ENCODE measurements at regions of chr7 and their contacts with region 1.

Region 1: DNA sequence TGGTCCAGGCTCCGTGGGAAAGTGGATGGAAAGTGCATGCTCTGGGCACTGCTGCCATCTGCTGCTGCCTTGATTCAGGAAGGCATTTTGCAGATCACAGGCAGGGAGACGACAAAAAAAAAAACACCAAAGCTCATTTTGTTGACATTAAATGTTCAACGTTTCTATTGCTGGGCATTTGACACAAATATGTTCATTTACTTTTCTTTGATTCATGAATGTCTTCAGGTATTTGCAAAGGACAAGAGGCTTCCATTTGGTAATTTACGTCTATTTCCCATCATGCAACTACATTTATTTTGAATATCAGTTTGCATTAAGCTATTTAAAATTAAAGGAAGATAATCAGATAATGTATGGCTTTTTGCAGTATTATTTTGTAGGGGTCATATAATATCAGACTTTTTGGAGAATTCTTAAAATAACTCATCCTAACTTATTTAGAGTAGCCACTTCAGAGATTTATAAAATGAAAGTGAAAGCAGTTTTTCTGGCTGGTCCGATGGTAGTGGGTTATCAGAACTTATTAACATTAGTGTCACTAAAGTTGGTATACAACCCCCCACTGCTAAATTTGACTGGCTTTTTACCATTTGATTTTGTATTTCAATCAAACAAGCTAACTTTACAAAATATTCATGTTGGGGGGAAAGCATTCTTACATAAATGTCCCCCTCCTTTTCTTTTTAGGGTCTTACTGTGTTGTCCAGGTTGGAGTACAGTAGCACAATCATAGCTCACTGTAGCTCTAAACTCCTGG is 65.3 kb downstream of the PDIA4 start:
- DNase-seq: peak in 1 of 2 donors; percentile 77
- H3K4me3 ChIP-seq: peak overlapping the region; percentile 65 to 71
- H3K27ac ChIP-seq: peak overlapping the region; percentile 68 to 79
- H3K4me1 ChIP-seq: peaks cover 0 to 2% of the 10 kb centered on the region in 2 donors
- H3K27me3 ChIP-seq: no peaks in the 10 kb centered on the region
- CTCF ChIP-seq: peak; percentile 46 to 73 (median 67)

Region 2: GRCh38 chr7:148503875-148504487 is 459.0 kb before region 1 on chr7:
- intact Hi-C with region 1: loop called (anchors 1 kb)
- DNase-seq: no peak
- H3K4me3 ChIP-seq: no peak overlapping the region
- H3K27ac ChIP-seq: no peak overlapping the region
- H3K4me1 ChIP-seq: no peaks in the 10 kb centered on the region
- H3K27me3 ChIP-seq: no peaks in the 10 kb centered on the region
- CTCF ChIP-seq: peak; percentile 46 to 69 (median 68)

Region 3: DNA sequence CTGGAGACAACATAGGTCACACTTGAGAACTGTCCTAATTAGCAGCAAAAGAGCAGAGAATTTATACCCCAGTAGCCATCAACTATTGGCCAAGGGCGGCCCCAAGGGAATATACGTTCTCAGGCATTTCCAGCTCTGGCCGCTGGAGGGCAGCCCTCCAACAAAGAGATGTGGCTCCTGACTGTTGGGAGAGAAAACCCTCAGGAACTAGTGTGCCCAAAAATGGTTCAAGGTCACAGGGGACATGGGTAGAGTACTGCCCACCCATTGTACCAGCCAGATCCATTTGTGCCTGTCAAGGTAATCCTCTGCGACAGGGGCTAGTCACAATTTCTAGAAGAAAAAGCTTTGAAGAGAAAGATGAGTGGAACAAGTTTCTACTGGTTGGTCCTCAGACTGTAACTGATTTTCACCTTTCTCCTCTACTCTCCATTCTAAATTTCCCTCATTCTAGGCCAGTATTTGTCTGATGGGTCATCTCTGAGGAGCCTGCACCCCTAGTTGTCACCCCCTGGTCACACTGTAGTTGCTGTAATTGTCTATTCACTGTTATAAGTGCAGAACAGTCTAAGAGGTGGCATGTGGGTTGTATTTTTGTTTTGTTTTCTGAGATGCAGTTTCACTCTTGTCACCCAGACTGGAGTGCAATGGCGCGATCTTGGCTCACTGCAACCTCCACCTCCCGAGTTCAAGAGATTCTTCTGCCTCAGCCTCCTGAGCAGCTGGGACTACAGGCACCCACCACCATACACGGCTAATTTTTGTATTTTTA is 387.2 kb before region 1 on chr7:
- intact Hi-C with region 1: loop called (anchors 1 kb)
- DNase-seq: peak in 1 of 2 donors; percentile 73
- H3K4me3 ChIP-seq: no peak overlapping the region
- H3K27ac ChIP-seq: no peak overlapping the region
- H3K4me1 ChIP-seq: no peaks in the 10 kb centered on the region
- H3K27me3 ChIP-seq: no peaks in the 10 kb centered on the region
- CTCF ChIP-seq: peak; percentile 18 to 79 (median 64)

Region 4: DNA sequence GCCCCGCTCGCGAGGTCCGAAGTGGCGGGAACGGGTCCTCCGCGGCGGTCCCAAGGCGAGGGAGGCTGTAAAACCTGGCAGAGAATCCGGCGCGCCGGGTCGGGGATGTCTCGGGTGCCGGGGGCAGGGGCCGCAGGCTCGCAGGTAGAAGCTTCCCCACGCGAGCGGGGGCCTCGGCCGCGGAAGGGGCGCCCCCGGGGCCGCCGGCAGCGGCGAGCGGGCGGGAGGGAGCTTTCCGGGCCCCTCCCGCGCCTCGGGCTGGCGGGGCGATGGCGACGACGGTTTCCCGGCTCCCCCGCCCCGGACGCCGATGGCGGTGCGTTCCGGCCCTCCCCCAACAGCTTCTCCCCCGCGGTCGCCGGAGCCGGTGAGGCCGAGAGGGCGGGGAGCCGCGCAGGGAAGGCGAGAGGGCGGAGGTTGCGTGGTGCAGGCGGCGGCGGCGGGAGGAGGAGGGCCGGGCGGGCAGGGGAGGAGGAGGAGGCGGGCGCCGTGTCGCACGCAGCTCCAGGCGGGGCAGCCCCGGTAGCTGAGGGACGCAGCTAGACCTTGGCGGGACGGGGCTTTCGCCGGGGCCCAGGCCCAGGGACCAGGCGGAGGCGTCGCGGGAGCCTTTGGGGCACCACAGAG is 264.5 kb before region 1 on chr7 and contains the start of gene CUL1:
- intact Hi-C with region 1: loop called (anchors 2 kb)
- DNase-seq: peak; percentile 36 to 92
- H3K4me3 ChIP-seq: peak within 1 kb of the TSS; percentile 97 to 99
- H3K27ac ChIP-seq: peak within 1 kb of the TSS; percentile 99 to 100
- H3K4me1 ChIP-seq: peaks cover 4 to 30% of the 10 kb centered on the region in 2 donors
- H3K27me3 ChIP-seq: no peaks in the 10 kb centered on the region
- CTCF ChIP-seq: no peak
- total RNA-seq, gene CUL1: 16.3 TPM

Region 5: GRCh38 chr7:148856891-148857290 is 106.1 kb before region 1 on chr7:
- intact Hi-C with region 1: loop called (anchors 1 kb)
- DNase-seq: no peak
- H3K4me3 ChIP-seq: no peak overlapping the region
- H3K27ac ChIP-seq: no peak overlapping the region
- H3K4me1 ChIP-seq: no peaks in the 10 kb centered on the region
- H3K27me3 ChIP-seq: no peaks in the 10 kb centered on the region
- CTCF ChIP-seq: no peak

Region 6: DNA sequence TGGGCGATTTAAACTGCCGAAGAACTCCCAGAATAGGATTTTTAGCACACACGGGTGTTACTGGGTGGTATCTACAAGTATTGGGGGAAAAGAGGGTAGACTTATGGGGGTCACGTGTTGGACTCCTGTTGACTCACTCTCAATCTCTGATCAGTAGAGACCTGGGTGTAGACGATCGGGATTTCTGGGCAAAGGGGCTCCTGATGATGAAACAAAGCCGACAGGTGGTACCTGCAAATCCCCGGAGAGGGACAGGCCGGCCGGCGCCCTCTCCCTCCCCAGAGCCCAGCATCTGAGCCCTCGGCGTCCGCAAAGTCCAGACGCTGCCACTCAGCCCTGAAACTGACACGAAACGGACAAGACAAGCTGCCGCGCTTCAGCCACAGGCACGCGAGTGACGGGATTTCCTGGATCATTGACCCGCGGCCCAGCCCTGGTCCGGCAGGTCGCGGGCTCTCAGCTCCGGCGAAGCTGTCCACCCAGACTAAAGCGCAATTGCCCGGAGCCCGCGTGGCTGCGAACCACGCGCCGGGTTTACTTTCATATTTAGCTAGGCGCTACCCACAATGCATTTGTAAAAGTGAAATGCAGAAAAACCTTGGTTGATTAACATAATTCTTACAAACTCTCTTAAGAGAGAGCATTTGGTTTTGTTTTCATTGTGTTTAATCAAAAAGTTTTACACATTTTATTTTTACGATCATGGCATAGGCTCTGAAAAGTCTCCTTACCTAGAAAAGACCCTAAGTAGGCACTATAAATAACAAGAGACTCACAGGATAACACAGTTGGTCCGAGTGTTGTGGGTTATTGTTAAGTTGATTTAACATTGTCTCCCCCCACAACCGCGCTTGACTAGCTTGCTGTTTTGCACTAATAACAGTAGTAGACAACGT is 22.1 kb before region 1 on chr7:
- intact Hi-C with region 1: loop called (anchors 1 kb)
- DNase-seq: peak; percentile 38 to 90
- H3K4me3 ChIP-seq: peak overlapping the region; percentile 84 to 86
- H3K27ac ChIP-seq: peak overlapping the region; percentile 90 to 93
- H3K4me1 ChIP-seq: no peaks in the 10 kb centered on the region
- H3K27me3 ChIP-seq: no peaks in the 10 kb centered on the region
- CTCF ChIP-seq: no peak

Region 7: GRCh38 chr7:148987010-148987750 is 24.2 kb after region 1 on chr7:
- intact Hi-C with region 1: loop called (anchors 1 kb)
- DNase-seq: peak; percentile 47 to 93
- H3K4me3 ChIP-seq: peak overlapping the region; percentile 70 to 72
- H3K27ac ChIP-seq: peak overlapping the region; percentile 88 to 94
- H3K4me1 ChIP-seq: peaks cover 0 to 16% of the 10 kb centered on the region in 2 donors
- H3K27me3 ChIP-seq: no peaks in the 10 kb centered on the region
- CTCF ChIP-seq: no peak

Region 8: GRCh38 chr7:149257146-149257545 is 294.1 kb after region 1 on chr7:
- intact Hi-C with region 1: no loop called
- DNase-seq: no peak
- H3K4me3 ChIP-seq: no peak overlapping the region
- H3K27ac ChIP-seq: no peak overlapping the region
- H3K4me1 ChIP-seq: peaks cover 0 to 4% of the 10 kb centered on the region in 2 donors
- H3K27me3 ChIP-seq: no peaks in the 10 kb centered on the region
- CTCF ChIP-seq: no peak

Region 9: DNA sequence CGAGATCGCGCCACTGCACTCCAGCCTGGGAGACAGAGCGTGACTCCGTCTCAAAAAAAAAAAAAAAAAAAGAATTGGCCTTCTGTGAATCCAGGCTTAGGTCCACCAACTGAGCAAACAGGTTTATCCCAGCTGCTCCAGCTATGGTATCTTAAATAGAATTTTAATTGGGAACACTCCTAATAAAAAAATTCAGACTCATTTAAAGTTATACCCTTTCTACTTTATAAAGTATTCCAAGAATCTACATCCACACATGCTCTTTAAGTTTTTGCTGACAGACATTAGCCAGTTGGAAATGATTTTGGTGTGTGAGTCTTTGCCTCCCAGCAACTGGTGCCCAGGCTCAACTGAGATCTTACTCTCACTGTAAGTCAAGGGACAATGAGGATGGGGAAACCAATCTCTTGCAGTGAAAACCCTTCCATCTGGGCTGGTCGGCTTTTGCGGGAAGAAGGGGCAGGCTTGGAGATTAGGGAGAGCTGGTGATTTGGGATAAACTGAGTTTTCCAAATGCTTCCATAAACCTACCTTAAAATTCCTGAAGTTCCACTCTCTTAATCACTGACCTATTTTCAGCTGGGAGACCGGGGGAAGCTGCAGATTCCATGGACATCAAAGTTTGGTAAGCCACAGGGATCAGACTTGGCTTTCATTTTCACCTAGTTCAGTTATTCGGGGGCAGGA is 623.8 kb after region 1 on chr7:
- intact Hi-C with region 1: no loop called
- DNase-seq: no peak
- H3K4me3 ChIP-seq: no peak overlapping the region
- H3K27ac ChIP-seq: no peak overlapping the region
- H3K4me1 ChIP-seq: no peaks in the 10 kb centered on the region
- H3K27me3 ChIP-seq: no peaks in the 10 kb centered on the region
- CTCF ChIP-seq: no peak